ENCODE measurements at regions of chr4 and their contacts with region 1.

Region 1: GRCh38 chr4:109803924-109804571 is 2.2 kb upstream of the CFI start:
- DNase-seq: peak; percentile 40
- H3K4me3 Mint-ChIP-seq: no peak overlapping the region
- H3K27ac Mint-ChIP-seq: no peak overlapping the region
- H3K4me1 Mint-ChIP-seq: peaks cover 17% of the 10 kb centered on the region
- H3K27me3 Mint-ChIP-seq: no peaks in the 10 kb centered on the region
- CTCF ChIP-seq: peak; percentile 29

Region 2: DNA sequence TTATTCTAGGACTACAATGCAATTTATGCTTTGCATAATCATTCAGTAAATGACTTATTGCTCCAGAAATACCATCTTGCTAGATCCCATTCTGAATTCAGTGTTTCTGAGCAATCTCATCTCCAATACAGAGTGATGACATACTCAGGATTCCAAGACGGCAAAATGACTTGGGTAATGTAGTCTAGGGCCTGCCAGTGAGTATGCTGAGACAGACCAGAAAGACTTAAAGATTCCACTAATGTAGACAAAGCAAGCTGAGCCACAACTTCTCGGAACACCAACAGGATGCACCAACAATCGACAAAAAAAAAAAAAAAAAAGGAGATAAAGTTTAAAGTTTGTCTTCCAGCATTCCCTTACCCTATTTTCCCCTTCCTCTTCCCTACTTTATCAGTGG is 371.4 kb before region 1 on chr4:
- CTCF ChIA-PET with region 1: interaction called, 8 read pairs
- intact Hi-C with region 1: loop called (anchors 2 kb)
- DNase-seq: no peak
- H3K4me3 Mint-ChIP-seq: peak overlapping the region; percentile 59
- H3K27ac Mint-ChIP-seq: no peak overlapping the region
- H3K4me1 Mint-ChIP-seq: no peaks in the 10 kb centered on the region
- H3K27me3 Mint-ChIP-seq: no peaks in the 10 kb centered on the region
- CTCF ChIP-seq: no peak

Region 3: DNA sequence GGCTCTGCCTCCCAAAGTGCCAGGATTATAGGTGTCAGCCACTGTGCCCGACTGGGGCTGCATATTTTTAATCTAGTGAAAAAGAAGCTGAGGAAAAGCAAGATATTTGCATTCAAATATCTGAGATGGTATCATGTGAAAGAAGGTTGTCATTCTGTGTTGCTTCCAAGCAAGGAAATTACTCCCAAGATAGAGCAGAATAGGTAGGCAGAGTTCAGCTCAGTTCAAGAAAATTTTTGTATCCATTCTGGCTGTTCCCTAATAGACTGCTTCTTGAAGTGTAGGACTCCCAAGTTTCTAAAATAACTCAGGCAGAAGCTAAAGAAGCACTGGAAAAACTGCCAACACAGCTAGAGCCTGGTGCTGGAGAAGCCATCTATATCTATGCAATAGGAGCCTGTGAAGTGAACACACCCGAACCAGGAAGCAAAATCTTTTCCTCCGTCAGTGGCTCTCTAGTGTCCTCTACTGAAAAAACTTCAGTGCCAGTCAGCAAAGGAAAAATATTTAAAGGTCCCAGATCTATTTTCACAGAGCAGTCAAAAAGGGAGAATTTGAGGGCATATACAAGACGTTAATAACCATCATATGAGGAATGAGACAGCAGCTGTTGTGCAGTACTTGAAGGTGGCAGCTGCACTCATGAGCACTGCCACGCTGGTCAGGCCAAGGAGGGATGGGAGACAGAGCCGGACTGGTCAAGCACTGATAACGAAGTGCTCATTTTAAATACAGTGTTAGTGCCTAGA is 229.8 kb before region 1 on chr4:
- CTCF ChIA-PET with region 1: no interaction called
- intact Hi-C with region 1: loop called (anchors 10 kb)
- DNase-seq: peak; percentile 14
- H3K4me3 Mint-ChIP-seq: no peak overlapping the region
- H3K27ac Mint-ChIP-seq: peak overlapping the region; percentile 45
- H3K4me1 Mint-ChIP-seq: peaks cover 17% of the 10 kb centered on the region
- H3K27me3 Mint-ChIP-seq: no peaks in the 10 kb centered on the region
- CTCF ChIP-seq: no peak

Region 4: DNA sequence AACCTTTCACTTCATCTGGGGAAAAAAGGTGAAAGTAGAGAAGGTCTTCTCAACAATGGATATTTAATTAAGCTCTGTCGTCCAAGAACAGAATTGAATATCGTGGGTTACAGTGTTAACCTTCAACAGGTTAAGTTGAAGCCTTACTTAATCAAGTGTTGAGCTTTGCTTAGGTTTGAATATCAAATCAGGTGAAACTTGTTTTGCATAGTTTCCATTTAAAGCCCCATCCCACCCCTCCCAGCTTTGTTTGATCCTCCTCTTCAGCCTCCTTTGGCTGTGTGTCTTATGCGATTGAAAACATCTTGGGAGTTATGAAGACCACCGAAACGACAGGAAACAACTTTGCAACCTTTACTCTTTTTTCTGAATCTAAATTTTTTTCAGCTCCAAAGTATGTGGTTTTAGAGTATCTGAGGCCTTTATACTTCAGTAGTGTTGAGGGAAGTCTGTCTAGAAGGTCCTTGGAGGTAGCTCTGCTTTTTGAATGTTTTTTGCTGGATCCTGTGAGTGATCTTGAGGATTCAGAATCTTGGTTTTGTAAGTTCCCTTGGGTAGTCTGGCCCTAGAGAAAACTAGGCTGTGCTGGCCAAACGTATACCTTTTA is 204.9 kb before region 1 on chr4:
- CTCF ChIA-PET with region 1: no interaction called
- intact Hi-C with region 1: no loop called
- DNase-seq: no peak
- H3K4me3 Mint-ChIP-seq: no peak overlapping the region
- H3K27ac Mint-ChIP-seq: no peak overlapping the region
- H3K4me1 Mint-ChIP-seq: no peaks in the 10 kb centered on the region
- H3K27me3 Mint-ChIP-seq: no peaks in the 10 kb centered on the region
- CTCF ChIP-seq: no peak

Region 5: DNA sequence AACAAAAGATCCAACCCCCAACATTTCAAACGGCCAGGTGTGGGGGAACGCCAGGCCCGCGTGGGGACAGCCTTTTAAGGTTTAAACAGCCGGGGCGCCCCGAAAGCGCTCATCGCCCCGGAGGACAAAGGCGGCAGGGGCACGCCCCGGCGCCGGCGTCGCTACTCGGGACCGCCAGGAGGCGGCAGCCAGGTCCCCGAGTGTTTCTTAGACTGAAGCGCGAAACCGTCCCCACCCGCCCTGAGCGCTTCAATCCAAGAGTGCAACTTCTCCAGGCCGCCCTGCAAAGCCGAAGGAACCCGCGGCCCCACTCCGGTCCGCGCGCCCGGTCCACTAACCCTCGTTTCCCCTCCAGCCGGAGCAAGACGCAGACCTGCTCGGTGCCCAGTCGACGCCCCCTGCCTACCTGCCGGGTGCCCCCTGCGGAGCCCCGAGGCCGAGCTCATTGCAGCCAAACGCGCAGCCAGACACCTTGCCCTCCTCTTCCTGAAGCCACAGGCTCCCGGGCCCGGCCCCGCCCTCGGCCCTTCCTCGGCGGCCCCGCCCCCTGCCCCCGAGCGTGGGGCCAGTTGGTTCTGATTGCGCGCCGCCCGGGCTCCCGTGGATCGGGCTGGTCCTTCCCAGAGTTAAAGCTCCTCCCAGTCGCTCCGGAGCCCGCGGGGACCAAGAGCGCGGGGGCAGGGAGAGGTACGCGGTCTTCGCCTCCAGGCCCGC is 100.9 kb before region 1 on chr4 and contains the start of gene CASP6:
- CTCF ChIA-PET with region 1: interaction called, 7 read pairs
- intact Hi-C with region 1: loop called (anchors 5 kb)
- DNase-seq: peak; percentile 75
- H3K4me3 Mint-ChIP-seq: peak within 1 kb of the TSS; percentile 92
- H3K27ac Mint-ChIP-seq: peak within 1 kb of the TSS; percentile 40
- H3K4me1 Mint-ChIP-seq: peaks cover 16% of the 10 kb centered on the region
- H3K27me3 Mint-ChIP-seq: no peaks in the 10 kb centered on the region
- CTCF ChIP-seq: peak; percentile 54
- total RNA-seq, gene CASP6: 16.1 and 22.3 TPM in 2 replicates

Region 6: DNA sequence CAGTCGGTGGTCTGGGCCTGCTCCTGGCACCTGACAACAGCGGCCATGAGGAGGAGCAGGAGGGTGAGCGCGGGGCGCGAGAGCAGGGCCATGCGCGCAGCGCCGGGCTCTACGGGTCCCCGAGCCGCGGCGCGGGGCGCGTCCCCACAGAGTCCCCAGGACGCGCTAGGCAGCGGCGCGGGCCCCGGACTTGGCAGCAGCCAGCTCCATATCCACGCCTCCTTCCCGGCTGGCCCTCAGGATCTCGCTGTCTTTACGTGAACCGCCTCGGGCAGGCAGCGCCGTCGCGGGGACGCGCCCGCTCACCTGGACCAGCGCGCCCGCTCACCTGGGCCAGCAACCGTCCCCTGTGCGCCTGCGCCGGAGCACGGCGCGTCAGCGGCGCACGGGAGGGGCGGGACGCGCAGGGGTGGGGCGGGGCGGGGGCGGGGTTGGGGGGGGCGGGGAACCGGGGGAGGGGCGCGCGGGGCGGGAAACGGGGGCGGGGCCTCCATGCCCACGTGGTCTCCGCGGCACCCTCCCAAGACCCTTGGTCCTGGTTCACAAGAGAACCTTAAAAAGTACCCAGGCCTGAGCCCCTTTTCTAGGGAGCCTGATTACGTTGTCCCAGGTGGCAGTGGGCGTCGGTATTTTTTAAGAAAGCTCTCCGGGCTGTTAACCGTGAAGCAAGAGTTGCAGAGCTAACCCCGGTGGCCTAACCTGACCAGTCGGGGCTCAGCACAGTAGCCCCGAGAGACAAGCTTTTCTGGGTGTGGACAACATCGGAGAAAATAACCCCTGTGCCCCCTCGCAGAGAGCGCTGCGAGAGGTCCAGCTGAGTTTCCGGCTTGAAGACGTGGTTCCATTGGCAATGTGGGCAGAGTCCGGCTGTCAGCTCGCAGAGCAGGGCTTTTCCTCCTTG is 74.1 kb before region 1 on chr4 and contains the start of gene PLA2G12A:
- CTCF ChIA-PET with region 1: interaction called, 6 read pairs
- intact Hi-C with region 1: loop called (anchors 5 kb)
- DNase-seq: peak; percentile 87
- H3K4me3 Mint-ChIP-seq: peak within 1 kb of the TSS; percentile 63
- H3K27ac Mint-ChIP-seq: peak within 1 kb of the TSS; percentile 82
- H3K4me1 Mint-ChIP-seq: peaks cover 22% of the 10 kb centered on the region
- H3K27me3 Mint-ChIP-seq: no peaks in the 10 kb centered on the region
- CTCF ChIP-seq: no peak
- total RNA-seq, gene PLA2G12A: 45.0 and 45.4 TPM in 2 replicates

Region 7: DNA sequence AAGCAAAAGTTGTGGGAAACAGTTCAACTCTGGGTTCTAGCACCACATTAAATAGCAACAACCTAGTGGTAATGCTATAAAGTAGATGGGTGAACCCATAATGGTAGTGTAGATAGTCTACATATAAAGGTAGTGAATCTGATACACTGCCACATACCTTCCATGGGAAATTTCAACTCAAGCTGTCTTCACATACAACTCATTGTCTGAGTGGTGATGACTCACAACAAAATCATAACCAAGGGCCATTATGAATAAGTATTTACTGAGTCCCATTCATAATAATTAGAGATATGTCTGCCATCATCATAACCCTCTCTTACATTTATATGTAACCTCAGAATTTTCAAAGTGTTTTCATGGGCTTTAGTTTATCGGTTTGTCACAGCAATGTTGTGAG is 143.4 kb after region 1 on chr4:
- CTCF ChIA-PET with region 1: no interaction called
- intact Hi-C with region 1: no loop called
- DNase-seq: no peak
- H3K4me3 Mint-ChIP-seq: no peak overlapping the region
- H3K27ac Mint-ChIP-seq: no peak overlapping the region
- H3K4me1 Mint-ChIP-seq: peaks cover 24% of the 10 kb centered on the region
- H3K27me3 Mint-ChIP-seq: no peaks in the 10 kb centered on the region
- CTCF ChIP-seq: no peak